Activated CD4-positive, alpha-beta T cell treated with anti-CD3 and anti-CD28 coated beads for 36 hours (primary cell): ENCODE measurements at regions of chrX and their contacts with region 1.

Region 1: DNA sequence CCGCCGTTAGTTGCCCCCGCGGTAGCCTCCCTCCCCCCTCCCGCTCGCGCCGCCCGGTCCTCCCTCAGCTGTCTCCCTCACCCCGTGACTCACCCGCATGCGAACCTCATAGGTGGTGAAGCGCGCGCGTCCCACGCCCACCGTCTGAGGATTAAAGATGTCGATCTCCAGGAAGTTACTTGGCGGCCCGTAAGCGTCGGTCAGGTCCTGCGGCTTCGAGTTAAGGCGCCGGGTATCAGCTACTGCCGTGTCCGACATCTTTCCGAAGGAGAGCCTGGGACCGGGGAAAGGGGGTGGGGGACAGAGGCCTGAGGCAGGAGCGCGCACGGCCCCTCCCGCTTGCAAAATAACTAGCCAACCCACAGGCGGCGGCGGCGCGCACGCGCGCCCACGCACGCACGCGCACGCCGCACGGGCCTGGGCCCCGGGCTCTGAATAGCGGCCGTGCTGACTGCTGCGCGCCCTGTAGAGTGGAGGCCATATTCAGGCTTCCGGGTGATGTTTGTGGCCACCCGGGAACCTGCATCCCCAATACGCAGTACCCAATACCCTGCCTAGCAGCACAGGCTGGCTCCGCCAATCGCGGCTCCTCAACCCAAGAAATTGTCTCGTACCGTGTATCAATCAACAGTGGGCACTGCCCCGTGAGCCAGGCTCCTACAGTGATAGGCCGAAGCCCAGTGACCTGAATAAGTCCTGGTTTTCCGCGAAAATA is at the start of gene SNX12:
- DNase-seq: peak; percentile 92
- ATAC-seq: peak; percentile 93
- H3K4me3 Mint-ChIP-seq: peak within 1 kb of the TSS; percentile 91
- H3K27ac Mint-ChIP-seq: peak within 1 kb of the TSS; percentile 93
- H3K4me1 Mint-ChIP-seq: peaks cover 17% of the 10 kb centered on the region
- H3K27me3 Mint-ChIP-seq: no peaks in the 10 kb centered on the region
- total RNA-seq, gene SNX12: 43.2 to 44.6 TPM

Region 2: GRCh38 chrX:70954877-70955276 is 113.3 kb before region 1 on chrX:
- CTCF ChIA-PET with region 1: no interaction called
- POLR2A ChIA-PET with region 1: no interaction called
- intact Hi-C with region 1: no loop called
- DNase-seq: no peak
- ATAC-seq: no peak
- H3K4me3 Mint-ChIP-seq: no peak overlapping the region
- H3K27ac Mint-ChIP-seq: no peak overlapping the region
- H3K4me1 Mint-ChIP-seq: no peaks in the 10 kb centered on the region
- H3K27me3 Mint-ChIP-seq: peaks cover 1% of the 10 kb centered on the region

Region 3: DNA sequence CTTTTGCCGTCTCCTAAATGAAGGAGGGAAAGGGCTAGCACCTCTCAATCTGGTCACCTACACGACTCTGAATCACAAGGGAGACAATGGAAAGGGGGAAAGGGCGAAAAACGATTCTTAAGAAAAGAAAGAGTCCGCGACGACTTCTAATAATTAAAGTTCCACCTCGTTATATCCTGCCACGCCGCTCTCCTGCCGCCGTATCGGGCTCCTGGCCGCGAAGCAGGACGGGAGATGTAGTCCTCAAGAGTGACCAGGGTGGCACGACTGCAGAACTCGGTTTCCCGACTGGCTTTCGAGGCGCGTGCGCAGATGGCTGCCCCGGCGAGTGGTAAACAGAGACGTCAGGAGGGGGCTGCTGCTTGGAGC is 27.3 kb after region 1 on chrX and contains the start of gene FOXO4:
- CTCF ChIA-PET with region 1: interaction called, 4 read pairs
- POLR2A ChIA-PET with region 1: no interaction called
- intact Hi-C with region 1: loop called (anchors 1 kb)
- DNase-seq: peak; percentile 92
- ATAC-seq: peak; percentile 93
- H3K4me3 Mint-ChIP-seq: peak within 1 kb of the TSS; percentile 89
- H3K27ac Mint-ChIP-seq: peak within 1 kb of the TSS; percentile 83
- H3K4me1 Mint-ChIP-seq: peaks cover 27% of the 10 kb centered on the region
- H3K27me3 Mint-ChIP-seq: no peaks in the 10 kb centered on the region
- total RNA-seq, gene FOXO4: 9.5 to 10.8 TPM

Region 4: DNA sequence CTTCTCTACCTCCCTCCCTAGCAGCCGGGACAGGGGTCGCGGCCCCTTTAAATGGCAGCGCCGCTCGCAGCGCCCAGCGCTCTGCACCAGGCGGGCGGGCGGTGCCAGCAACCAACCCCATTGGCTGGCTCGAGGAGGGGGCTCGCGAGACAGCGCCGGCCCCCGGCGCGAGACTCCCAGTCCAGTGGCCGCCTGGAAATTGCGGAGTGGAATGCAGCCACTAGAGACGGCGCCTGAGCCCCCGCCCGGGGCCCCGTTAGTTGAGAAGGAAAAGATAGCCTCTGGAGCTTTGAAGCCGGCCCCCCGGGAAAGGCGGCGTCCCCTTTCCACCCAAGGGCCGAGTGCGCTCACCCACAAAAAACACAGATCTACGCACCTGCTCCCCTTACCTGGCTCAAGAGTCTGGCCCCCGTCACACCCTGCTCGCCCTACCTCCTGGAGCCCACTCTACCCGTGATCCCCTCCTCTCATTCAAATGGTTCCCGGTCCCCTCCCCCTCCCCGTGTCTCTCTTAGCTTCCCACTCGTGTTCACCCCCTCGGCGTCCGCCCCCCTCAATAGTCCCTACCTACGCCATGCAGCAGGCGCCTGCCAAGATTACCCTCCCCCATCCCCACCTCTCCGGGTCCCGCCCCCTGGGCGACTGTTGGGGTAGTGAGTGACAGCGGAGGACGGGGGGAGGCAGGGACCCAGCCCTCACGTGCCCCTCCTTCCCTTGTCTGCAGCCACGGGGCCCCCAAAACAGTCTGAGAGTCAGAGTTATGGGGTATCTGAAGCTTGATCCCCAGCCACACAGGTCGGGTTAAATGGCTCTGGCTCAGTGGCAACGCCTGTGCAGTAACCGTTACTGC is 186.1 kb after region 1 on chrX and contains the start of gene ZMYM3:
- CTCF ChIA-PET with region 1: no interaction called
- POLR2A ChIA-PET with region 1: no interaction called
- intact Hi-C with region 1: loop called in 1 of 2 experiments (anchors 1 kb)
- DNase-seq: peak; percentile 87
- ATAC-seq: peak; percentile 86
- H3K4me3 Mint-ChIP-seq: peak within 1 kb of the TSS; percentile 84
- H3K27ac Mint-ChIP-seq: peak within 1 kb of the TSS; percentile 83
- H3K4me1 Mint-ChIP-seq: peaks cover 29% of the 10 kb centered on the region
- H3K27me3 Mint-ChIP-seq: no peaks in the 10 kb centered on the region
- total RNA-seq, gene ZMYM3: 22.6 to 22.8 TPM

Region 5: GRCh38 chrX:72408885-72409284 is 1340.7 kb after region 1 on chrX:
- CTCF ChIA-PET with region 1: no interaction called
- POLR2A ChIA-PET with region 1: no interaction called
- intact Hi-C with region 1: no loop called
- DNase-seq: no peak
- ATAC-seq: no peak
- H3K4me3 Mint-ChIP-seq: no peak overlapping the region
- H3K27ac Mint-ChIP-seq: no peak overlapping the region
- H3K4me1 Mint-ChIP-seq: no peaks in the 10 kb centered on the region
- H3K27me3 Mint-ChIP-seq: no peaks in the 10 kb centered on the region